CD4-positive, alpha-beta memory T cell (primary cell): ENCODE measurements at regions of chr12 and their contacts with region 1.

Region 1: DNA sequence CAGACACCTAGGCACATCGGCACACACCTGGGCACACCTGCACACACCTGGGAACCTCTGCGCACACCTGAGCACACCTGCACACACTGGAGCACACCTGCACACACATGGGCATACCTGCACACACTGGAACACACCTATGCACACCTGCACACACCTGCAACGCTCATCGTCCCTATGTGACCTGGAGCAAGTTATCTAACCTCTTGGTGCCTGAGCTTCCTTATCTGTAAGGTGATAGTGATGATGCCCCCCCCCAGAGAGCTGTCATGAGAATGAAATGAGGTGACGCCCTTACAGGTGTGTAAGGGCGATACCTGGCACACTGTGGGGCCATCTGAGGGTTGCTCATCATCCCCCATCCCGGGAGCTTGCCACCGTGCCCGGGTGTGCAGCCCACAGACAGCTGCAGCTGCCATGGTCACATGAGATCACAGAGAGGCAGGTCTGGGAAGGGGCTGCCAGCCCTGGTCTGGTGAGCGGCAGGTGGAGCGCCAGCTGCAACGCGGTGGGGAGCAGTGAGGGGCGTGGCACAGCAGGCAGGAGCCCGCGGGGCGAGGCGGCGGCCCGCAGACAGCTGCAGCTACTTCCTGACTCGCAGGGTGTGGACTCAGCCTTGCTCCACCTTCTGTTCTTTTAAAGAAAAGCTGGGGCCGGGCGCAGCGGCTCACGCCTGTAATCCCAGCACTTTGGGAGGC is 59.9 kb upstream of the FBRSL1 start:
- DNase-seq: peak; percentile 61 to 76 (median 72)
- H3K4me3 ChIP-seq: peak overlapping the region in 1 of 2 donors; percentile 23
- H3K4me3 Mint-ChIP-seq: peak overlapping the region; percentile 36 to 86 (median 71)
- H3K27ac ChIP-seq: no peak overlapping the region
- H3K27ac Mint-ChIP-seq: peak overlapping the region in 6 of 7 donors; percentile 32 to 75 (median 66)
- H3K4me1 ChIP-seq: peaks cover 36% of the 10 kb centered on the region
- H3K4me1 Mint-ChIP-seq: peaks cover 17 to 45% (median 24%) of the 10 kb centered on the region in 4 donors
- H3K27me3 ChIP-seq: no peaks in the 10 kb centered on the region
- H3K27me3 Mint-ChIP-seq: no peaks in the 10 kb centered on the region

Region 2: DNA sequence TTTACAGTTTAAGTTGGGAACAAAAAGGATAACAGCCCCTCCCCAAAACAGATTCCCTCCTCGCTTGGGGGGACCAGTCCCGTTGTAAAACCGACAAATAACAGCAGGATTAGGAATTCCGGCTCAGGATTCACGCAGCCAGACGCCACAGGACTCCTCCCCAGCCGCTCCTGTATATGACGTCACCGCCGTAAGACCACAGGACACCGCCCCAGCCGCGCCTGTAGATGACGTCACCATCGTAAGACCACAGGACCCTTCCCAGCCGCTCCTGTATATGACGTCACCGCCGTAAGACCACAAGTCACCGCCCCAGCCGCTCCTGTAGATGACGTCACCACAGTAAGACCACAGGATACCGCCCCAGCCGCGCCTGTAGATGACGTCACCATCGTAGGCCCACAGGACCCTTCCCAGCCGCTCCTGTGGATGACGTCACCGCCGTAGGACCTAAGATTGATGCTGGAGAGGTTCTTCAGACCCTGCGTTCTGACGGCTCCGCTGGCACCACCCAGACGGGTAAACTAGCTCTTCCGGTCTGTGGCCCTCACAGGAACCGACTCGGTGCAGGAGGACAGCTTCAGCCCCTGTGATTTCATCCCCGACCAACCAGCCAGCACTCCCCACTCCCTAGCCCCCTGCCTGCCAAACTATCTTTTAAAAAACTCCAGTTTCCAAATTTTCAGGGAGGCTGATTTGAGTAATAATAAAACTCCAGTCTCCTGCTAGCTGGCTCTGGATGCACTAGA is 16.0 kb after region 1 on chr12:
- CTCF ChIA-PET with region 1: interaction called, 4 read pairs
- POLR2A ChIA-PET with region 1: interaction called, 13 read pairs
- intact Hi-C with region 1: loop called (anchors 1 kb)
- DNase-seq: peak; percentile 65 to 88 (median 84)
- H3K4me3 ChIP-seq: peak overlapping the region; percentile 36 to 56
- H3K4me3 Mint-ChIP-seq: peak overlapping the region; percentile 79 to 92 (median 87)
- H3K27ac ChIP-seq: peak overlapping the region; percentile 86
- H3K27ac Mint-ChIP-seq: peak overlapping the region; percentile 99 to 100 (median 99)
- H3K4me1 ChIP-seq: peaks cover 44% of the 10 kb centered on the region
- H3K4me1 Mint-ChIP-seq: peaks cover 24 to 43% (median 35%) of the 10 kb centered on the region in 4 donors
- H3K27me3 ChIP-seq: no peaks in the 10 kb centered on the region
- H3K27me3 Mint-ChIP-seq: peaks cover 0 to 2% of the 10 kb centered on the region in 2 donors